ENCODE measurements at regions of chr19 and their contacts with region 1.

Region 1: GRCh38 chr19:12806239-12807081 is at the start of gene RNASEH2A:
- DNase-seq: peak; percentile 89 to 92
- ATAC-seq: peak; percentile 80 to 94 (median 92)
- H3K4me3 ChIP-seq: peak within 1 kb of the TSS; percentile 27 to 80 (median 62)
- H3K27ac ChIP-seq: peak within 1 kb of the TSS in 9 of 10 donors; percentile 41 to 81 (median 66)
- H3K4me1 ChIP-seq: peaks cover 6 to 26% (median 17%) of the 10 kb centered on the region in 9 donors
- H3K27me3 ChIP-seq: peaks cover 0 to 12% (median 0%) of the 10 kb centered on the region in 7 donors
- CTCF ChIP-seq: peak in 2 of 9 donors; percentile 10 to 21
- total RNA-seq, gene RNASEH2A: 1.9 to 5.7 (median 4.1) TPM

Region 2: DNA sequence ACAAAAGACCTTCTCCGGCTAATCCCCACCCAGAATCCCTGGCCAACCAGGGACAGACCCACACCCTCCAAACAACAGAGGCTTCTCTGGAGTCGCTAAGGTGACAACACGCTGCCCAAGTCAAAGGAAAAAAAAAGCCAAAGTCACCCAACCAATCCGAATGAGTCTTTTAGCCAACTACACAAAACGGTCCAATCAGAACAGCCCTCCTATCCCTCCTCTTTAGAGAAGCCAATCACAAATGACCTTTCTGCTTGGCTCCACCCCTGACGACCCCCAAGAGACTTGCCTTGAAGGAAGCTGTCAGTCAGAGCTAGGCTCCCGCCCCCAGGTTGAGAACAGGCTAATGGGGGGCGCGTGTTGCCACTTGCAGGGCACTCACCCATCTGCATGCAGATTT is 103.4 kb before region 1 on chr19:
- intact Hi-C with region 1: loop called in 1 of 10 experiments (anchors 10 kb)
- DNase-seq: no peak
- ATAC-seq: no peak
- H3K4me3 ChIP-seq: no peak overlapping the region
- H3K27ac ChIP-seq: no peak overlapping the region
- H3K4me1 ChIP-seq: no peaks in the 10 kb centered on the region
- H3K27me3 ChIP-seq: no peaks in the 10 kb centered on the region
- CTCF ChIP-seq: no peak

Region 3: DNA sequence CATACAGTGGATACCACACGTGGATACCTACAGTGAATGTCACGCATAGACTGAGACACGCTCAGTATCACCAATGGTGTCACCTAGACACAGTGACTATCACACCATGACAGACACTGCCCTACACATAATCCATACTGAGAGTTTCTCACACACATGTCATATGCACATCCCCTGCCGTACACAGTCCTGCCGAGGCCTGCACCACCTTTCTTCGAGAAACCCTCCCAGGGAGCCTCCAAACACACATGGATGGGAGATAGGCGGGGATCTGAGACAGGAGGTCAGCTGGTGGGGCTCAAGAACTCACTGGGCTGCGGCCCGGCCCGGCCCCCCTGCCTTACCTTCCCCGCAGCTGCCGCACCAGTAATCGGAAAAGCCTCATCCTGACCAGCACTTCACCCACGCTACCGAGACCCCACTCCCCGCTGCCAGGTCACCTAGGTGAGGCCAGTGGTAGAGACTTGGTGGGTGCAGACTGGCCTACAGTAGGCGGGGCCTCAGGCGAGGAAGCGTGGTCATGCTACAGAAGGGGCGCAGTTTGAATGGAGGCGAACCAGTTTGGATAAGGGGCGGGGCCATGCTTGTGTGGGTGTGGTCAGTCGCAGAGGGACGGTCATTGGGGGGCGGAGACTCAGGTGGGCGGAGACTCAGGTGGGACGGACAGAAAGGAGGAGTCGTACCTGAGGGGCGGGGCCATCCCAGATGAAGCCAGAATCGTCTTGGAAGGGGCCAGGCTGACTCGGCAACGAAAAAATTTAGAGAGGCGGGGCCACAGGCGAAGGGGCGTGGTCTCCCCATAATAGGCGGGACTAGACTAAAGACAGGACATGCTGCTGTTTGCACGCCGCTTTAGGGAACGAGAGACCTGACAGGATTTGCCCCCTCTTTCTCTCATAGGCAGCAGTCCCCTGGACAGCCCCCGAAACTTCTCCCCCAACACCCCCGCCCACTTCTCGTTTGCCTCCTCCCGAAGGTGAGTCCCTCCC is 33.9 kb after region 1 on chr19:
- intact Hi-C with region 1: loop called in 1 of 10 experiments (anchors 5 kb)
- DNase-seq: peak in 1 of 2 donors; percentile 38
- ATAC-seq: peak in 6 of 8 donors; percentile 16 to 53 (median 36)
- H3K4me3 ChIP-seq: peak overlapping the region in 8 of 10 donors; percentile 8 to 33 (median 20)
- H3K27ac ChIP-seq: no peak overlapping the region
- H3K4me1 ChIP-seq: peaks cover 0 to 25% (median 14%) of the 10 kb centered on the region in 9 donors
- H3K27me3 ChIP-seq: peaks cover 16 to 100% (median 94%) of the 10 kb centered on the region in 7 donors
- CTCF ChIP-seq: no peak